ENCODE measurements at regions of chr9 and their contacts with region 1.

Region 1: GRCh38 chr9:34982361-34982760 is 7.2 kb upstream of the DNAJB5 start:
- DNase-seq: no peak
- ATAC-seq: no peak
- H3K4me3 ChIP-seq: no peak overlapping the region
- H3K27ac ChIP-seq: no peak overlapping the region
- H3K4me1 ChIP-seq: no peaks in the 10 kb centered on the region
- H3K27me3 ChIP-seq: no peaks in the 10 kb centered on the region
- CTCF ChIP-seq: no peak

Region 2: GRCh38 chr9:35014517-35014916 is 32.2 kb after region 1 on chr9:
- CTCF ChIA-PET with region 1: interaction called, 15 read pairs
- POLR2A ChIA-PET with region 1: no interaction called
- in situ Hi-C with region 1: no loop called
- intact Hi-C with region 1: no loop called
- DNase-seq: no peak
- ATAC-seq: no peak
- H3K4me3 ChIP-seq: no peak overlapping the region
- H3K27ac ChIP-seq: no peak overlapping the region
- H3K4me1 ChIP-seq: no peaks in the 10 kb centered on the region
- H3K27me3 ChIP-seq: no peaks in the 10 kb centered on the region
- CTCF ChIP-seq: no peak